ENCODE measurements at regions of chr9 and their contacts with region 1.

Region 1: GRCh38 chr9:36102742-36103495 is 33.6 kb upstream of the GLIPR2 start:
- DNase-seq: peak; percentile 77
- H3K4me3 ChIP-seq: no peak overlapping the region
- H3K27ac ChIP-seq: peak overlapping the region; percentile 41
- H3K4me1 ChIP-seq: peaks cover 19% of the 10 kb centered on the region
- H3K27me3 ChIP-seq: no peaks in the 10 kb centered on the region
- CTCF ChIP-seq: peak; percentile 70 to 81
- POLR2A ChIP-seq: peak; percentile 12

Region 2: DNA sequence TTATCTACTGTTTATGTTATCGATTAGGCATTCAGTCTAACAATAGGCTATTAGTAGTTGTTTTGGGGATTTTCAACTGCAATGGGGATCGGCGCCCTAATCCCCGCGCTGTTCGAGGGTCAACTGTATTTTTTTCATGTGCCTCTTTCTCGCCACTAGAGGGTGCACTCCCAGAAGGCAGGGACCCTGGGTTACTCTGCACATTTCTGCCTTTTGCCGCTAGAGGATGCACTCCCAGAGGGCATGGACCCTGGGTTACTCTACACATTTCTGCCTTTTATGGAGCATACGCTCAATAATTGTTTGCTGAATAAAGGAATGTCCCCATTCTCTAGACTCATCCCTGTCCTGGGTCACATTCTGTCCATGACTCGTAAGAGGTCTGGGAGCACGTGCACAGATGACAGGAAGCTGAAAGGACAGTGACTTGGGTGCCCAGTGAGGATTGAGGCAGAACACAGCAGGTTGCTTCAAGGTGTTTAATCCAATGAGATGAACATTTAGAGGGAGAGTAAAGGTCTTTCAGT is 94.1 kb before region 1 on chr9:
- CTCF ChIA-PET with region 1: interaction called, 60 read pairs
- POLR2A ChIA-PET with region 1: interaction called, 3 read pairs
- dilution Hi-C with region 1: no loop called
- intact Hi-C with region 1: loop called (anchors 5 kb)
- DNase-seq: peak; percentile 54
- H3K4me3 ChIP-seq: no peak overlapping the region
- H3K27ac ChIP-seq: no peak overlapping the region
- H3K4me1 ChIP-seq: no peaks in the 10 kb centered on the region
- H3K27me3 ChIP-seq: peaks cover 2 to 16% of the 10 kb centered on the region in 2 experiments
- CTCF ChIP-seq: peak; percentile 80 to 100
- POLR2A ChIP-seq: no peak

Region 3: DNA sequence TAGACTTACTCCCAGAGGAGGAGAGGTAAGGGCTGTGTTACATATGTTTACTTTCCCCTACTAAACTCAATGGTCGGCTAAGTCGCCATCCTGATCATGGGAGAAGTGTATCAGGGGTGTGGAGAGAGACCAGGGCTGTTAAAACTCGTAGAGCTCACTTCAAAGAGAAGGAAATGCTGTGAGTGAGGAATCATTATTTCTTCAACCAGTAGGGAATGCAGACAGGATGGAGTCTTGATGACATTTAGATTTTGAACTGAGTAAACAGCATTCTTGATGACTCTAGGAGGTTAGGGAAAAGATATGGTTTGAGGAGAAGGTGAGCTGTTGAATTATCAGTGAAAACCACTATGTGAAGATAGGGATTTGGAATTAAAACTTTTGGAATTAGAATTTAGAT is 48.9 kb before region 1 on chr9:
- CTCF ChIA-PET with region 1: interaction called, 16 read pairs
- POLR2A ChIA-PET with region 1: no interaction called
- dilution Hi-C with region 1: no loop called
- intact Hi-C with region 1: no loop called
- DNase-seq: peak; percentile 50
- H3K4me3 ChIP-seq: no peak overlapping the region
- H3K27ac ChIP-seq: no peak overlapping the region
- H3K4me1 ChIP-seq: peaks cover 6% of the 10 kb centered on the region
- H3K27me3 ChIP-seq: no peaks in the 10 kb centered on the region
- CTCF ChIP-seq: no peak
- POLR2A ChIP-seq: no peak

Region 4: DNA sequence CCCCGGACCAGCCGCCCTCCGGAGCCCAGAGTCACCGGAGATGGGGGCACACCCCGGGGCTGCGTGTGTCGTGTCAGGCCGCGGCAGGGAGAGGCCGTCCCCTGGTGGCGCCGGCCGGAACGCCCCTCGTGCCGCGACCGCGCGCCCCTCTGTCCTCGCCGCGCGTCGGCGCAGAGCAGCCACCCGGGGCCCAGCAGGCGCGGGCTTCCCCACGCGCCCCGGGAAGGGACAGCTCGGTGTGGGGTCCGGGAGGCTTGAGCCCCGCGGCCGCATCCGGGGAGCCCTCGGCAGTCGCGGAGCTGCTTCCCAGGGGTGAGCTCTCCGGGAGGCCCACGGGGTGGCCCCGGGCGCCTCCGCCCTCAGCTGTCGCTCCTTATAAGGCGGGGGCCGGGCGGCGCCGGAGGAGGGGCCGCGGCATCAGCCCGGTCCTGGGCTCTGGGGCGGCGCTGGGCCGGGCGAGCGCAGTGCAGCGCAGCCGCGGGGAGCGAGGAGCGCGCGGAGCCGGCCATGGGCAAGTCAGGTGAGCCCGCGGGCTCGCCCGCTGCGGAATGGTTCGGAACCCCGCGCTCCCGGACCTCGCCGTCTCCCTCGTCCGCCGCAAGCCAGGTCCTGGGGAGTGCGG is 33.5 kb after region 1 on chr9 and contains the start of gene GLIPR2:
- CTCF ChIA-PET with region 1: interaction called, 13 read pairs
- POLR2A ChIA-PET with region 1: no interaction called
- dilution Hi-C with region 1: no loop called
- intact Hi-C with region 1: loop called (anchors 2 kb)
- DNase-seq: peak; percentile 55
- H3K4me3 ChIP-seq: peak within 1 kb of the TSS; percentile 40 to 62 (median 61)
- H3K27ac ChIP-seq: peak within 1 kb of the TSS; percentile 16
- H3K4me1 ChIP-seq: peaks cover 11% of the 10 kb centered on the region
- H3K27me3 ChIP-seq: no peaks in the 10 kb centered on the region
- CTCF ChIP-seq: peak; percentile 12 to 23
- POLR2A ChIP-seq: no peak
- total RNA-seq, gene GLIPR2: 20.0 and 22.0 TPM in 2 replicates

Region 5: DNA sequence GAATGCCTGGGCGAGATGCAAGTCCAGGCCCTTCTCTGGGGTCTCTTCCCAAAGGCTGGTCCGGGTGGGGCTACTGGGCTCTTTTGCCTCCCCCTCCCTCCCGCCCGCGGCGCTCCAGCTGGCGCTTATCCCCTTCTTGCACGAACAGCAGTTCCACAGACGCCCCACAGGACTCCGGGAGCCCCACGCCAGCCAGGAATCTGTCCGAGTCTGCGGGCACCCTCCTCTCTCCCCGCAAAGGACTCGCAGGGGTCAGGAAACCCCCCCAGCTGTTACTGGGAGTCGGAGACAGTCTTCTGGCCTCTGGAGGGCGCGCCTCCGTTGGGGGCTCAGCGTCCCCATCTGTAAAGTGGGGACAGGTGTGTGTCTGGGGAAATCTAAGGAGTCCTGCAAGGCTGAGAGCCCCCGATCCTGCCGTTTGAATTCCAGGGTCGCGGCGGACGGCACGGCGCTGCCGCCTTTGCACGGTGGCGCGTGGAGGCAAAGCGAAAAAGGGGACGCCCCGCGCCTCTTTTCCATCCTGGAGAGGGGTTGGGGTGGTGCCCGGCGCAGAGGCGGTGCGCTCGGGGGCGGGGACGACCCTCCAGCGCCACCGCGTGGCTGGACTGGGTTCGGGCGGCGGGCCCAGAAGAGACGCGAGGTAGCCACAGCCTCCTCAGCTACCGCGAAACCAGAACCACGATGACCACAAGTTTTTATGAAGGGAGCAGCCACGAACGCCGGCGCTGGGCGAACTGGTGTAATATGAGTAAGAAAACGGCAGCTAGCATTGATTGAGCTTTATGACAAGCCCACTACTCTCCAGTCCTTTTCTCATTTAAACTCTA is 63.4 kb after region 1 on chr9:
- CTCF ChIA-PET with region 1: interaction called, 189 read pairs
- POLR2A ChIA-PET with region 1: interaction called, 4 read pairs
- dilution Hi-C with region 1: no loop called
- intact Hi-C with region 1: loop called (anchors 1 kb)
- DNase-seq: peak; percentile 80
- H3K4me3 ChIP-seq: peak overlapping the region in 2 of 3 experiments; percentile 4 to 51
- H3K27ac ChIP-seq: no peak overlapping the region
- H3K4me1 ChIP-seq: peaks cover 16% of the 10 kb centered on the region
- H3K27me3 ChIP-seq: no peaks in the 10 kb centered on the region
- CTCF ChIP-seq: peak; percentile 89 to 95
- POLR2A ChIP-seq: no peak

Region 6: GRCh38 chr9:36250079-36250478 is 147.2 kb after region 1 on chr9:
- CTCF ChIA-PET with region 1: no interaction called
- POLR2A ChIA-PET with region 1: no interaction called
- dilution Hi-C with region 1: no loop called
- intact Hi-C with region 1: no loop called
- DNase-seq: no peak
- H3K4me3 ChIP-seq: no peak overlapping the region
- H3K27ac ChIP-seq: no peak overlapping the region
- H3K4me1 ChIP-seq: no peaks in the 10 kb centered on the region
- H3K27me3 ChIP-seq: no peaks in the 10 kb centered on the region
- CTCF ChIP-seq: no peak
- POLR2A ChIP-seq: no peak

Region 7: GRCh38 chr9:36328798-36329411 is 226.0 kb after region 1 on chr9:
- CTCF ChIA-PET with region 1: interaction called, 14 read pairs
- POLR2A ChIA-PET with region 1: no interaction called
- dilution Hi-C with region 1: no loop called
- intact Hi-C with region 1: no loop called
- DNase-seq: peak; percentile 78
- H3K4me3 ChIP-seq: no peak overlapping the region
- H3K27ac ChIP-seq: no peak overlapping the region
- H3K4me1 ChIP-seq: no peaks in the 10 kb centered on the region
- H3K27me3 ChIP-seq: no peaks in the 10 kb centered on the region
- CTCF ChIP-seq: peak; percentile 46 to 55
- POLR2A ChIP-seq: no peak

Measured in endothelial cell of umbilical vein (primary cell).